ENCODE measurements at regions of chr9 and their contacts with region 1.

Region 1: GRCh38 chr9:101977614-101978210 is 239.3 kb upstream of the GRIN3A start:
- DNase-seq: peak; percentile 21
- H3K4me3 ChIP-seq: no peak overlapping the region
- H3K27ac ChIP-seq: no peak overlapping the region
- H3K4me1 ChIP-seq: no peaks in the 10 kb centered on the region
- H3K27me3 ChIP-seq: no peaks in the 10 kb centered on the region
- CTCF ChIP-seq: peak; percentile 65

Region 2: DNA sequence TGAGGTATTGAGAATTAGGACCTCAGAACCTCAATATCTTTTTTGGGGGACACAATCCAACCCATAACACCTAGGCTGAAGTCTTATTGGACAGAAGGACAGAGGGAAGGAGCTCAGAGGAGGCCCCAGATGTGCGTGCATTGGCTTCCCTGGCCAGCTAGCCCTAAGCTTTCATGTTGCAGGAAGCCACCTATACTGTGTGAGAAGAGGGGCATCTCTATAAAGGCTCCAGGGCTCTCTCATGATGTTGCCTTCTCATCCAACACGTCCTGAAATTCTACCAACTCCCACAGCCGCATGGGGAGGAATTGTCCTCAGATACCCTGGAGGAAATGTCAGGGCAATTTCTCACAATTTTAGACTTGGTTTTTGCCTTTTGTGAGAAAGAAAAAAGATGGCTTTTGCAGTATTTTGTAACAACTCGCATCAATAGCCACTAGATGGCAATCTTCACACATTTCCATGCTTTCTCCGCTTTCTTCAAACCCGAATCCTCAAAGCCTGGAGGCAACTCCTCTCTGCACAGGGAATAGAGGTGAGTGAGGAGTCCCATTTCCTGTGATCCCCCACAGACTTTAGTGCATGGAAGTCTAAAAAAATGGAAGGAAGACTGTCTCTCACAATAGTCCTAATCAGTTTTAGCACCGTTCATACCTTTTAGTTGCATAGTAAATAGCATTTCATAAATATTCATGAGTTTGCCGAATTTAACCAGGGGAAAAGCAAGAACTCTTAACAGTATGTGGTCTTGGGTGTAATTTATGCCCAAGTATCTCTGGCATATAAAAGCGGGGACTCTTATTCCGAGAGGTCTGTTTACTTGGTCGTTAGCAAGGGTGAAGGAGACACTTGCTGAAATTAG is 375.6 kb before region 1 on chr9:
- CTCF ChIA-PET with region 1: no interaction called
- POLR2A ChIA-PET with region 1: no interaction called
- intact Hi-C with region 1: loop called (anchors 10 kb)
- DNase-seq: peak; percentile 77
- H3K4me3 ChIP-seq: no peak overlapping the region
- H3K27ac ChIP-seq: no peak overlapping the region
- H3K4me1 ChIP-seq: no peaks in the 10 kb centered on the region
- H3K27me3 ChIP-seq: peaks cover 7% of the 10 kb centered on the region
- CTCF ChIP-seq: peak; percentile 72

Region 3: DNA sequence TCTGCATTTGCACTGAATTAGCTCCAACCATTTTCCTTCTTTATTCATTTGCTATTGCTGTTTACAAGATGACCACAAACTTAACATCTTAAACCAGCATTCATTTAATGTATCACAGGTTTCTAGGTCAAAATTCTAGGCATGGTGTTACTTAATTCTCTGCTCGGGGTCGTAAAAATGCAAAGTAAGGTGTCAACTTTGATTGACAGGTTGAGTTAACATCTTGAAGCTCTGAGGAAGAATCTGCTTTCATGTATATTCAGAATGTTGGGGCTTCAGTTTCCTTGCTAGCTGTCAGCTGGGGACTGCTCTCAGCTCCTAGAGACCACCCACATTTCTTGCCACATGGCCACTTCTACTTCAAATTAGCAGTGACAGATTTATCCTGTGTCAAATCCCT is 109.4 kb after region 1 on chr9:
- CTCF ChIA-PET with region 1: no interaction called
- POLR2A ChIA-PET with region 1: no interaction called
- intact Hi-C with region 1: no loop called
- DNase-seq: no peak
- H3K4me3 ChIP-seq: no peak overlapping the region
- H3K27ac ChIP-seq: no peak overlapping the region
- H3K4me1 ChIP-seq: no peaks in the 10 kb centered on the region
- H3K27me3 ChIP-seq: no peaks in the 10 kb centered on the region
- CTCF ChIP-seq: no peak

Region 4: DNA sequence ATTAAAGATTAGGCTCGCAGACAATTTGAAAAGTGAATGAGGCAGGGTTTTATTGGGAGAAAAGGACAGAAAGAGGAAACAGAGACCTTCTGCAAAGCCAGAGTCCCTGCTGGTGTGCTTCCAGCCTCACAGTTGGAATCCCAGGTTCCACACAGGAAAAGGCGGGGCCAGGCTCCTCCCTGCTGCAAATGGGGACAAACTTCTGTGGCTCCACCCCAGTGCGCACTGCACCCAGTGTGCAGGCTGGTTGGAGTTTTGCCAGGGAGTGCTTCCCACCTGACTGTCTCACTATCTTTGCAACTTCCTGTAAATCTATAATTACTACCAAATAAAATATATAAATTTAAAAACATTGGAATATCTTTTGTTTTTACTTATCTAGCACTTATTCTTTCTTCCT is 146.8 kb after region 1 on chr9:
- CTCF ChIA-PET with region 1: no interaction called
- POLR2A ChIA-PET with region 1: no interaction called
- intact Hi-C with region 1: no loop called
- DNase-seq: peak; percentile 18
- H3K4me3 ChIP-seq: no peak overlapping the region
- H3K27ac ChIP-seq: no peak overlapping the region
- H3K4me1 ChIP-seq: no peaks in the 10 kb centered on the region
- H3K27me3 ChIP-seq: no peaks in the 10 kb centered on the region
- CTCF ChIP-seq: no peak

Measured in A673 (cell line).